Activated CD4-positive, alpha-beta T cell treated with anti-CD3 and anti-CD28 coated beads for 36 hours (primary cell): ENCODE measurements at regions of chr7 and their contacts with region 1.

Region 1: DNA sequence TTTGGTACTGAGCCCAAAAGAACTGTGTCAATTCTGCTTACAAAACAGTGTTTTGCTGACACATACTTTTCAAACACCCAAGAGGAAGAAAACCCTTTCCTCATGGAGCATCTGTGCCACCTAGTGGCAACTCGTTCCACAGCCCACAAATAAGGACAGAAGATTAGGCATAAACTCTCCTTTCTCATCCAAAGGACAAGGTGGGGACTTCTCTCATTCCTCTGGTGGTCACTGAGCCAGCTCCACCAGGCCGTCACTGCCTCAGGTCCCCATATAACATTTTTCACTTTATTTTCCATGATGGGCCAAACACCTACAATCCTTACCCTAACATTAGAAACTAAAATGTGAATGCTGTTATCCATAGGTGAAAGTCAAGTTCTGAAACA is 76.9 kb downstream of the RNF216 start:
- DNase-seq: peak; percentile 86
- ATAC-seq: no peak
- H3K4me3 Mint-ChIP-seq: no peak overlapping the region
- H3K27ac Mint-ChIP-seq: no peak overlapping the region
- H3K4me1 Mint-ChIP-seq: peaks cover 80% of the 10 kb centered on the region
- H3K27me3 Mint-ChIP-seq: no peaks in the 10 kb centered on the region

Region 2: GRCh38 chr7:5494683-5495561 is 209.6 kb before region 1 on chr7:
- CTCF ChIA-PET with region 1: interaction called, 27 read pairs
- POLR2A ChIA-PET with region 1: no interaction called
- intact Hi-C with region 1: loop called (anchors 1 kb)
- DNase-seq: peak; percentile 90
- ATAC-seq: peak; percentile 91
- H3K4me3 Mint-ChIP-seq: no peak overlapping the region
- H3K27ac Mint-ChIP-seq: no peak overlapping the region
- H3K4me1 Mint-ChIP-seq: peaks cover 25% of the 10 kb centered on the region
- H3K27me3 Mint-ChIP-seq: no peaks in the 10 kb centered on the region

Region 3: DNA sequence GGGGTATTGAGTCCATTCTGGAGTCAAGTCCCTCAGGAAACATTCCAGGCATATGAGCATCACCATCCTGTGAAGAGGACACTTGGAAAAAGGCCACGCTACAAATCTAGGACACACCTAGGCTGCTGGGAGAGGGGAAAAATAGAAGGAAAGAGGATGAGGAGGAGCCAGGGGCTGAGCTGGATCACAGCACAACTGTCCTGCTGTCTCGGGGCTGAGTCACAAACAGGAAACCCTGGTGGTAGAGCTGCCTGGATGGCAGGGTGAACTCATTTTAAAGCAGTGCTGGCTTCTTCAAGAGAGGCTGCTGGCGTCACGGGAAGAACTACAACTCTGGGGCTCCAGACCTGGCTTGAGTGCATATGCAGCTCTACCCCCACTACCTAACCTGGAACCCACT is 74.6 kb before region 1 on chr7:
- CTCF ChIA-PET with region 1: interaction called, 6 read pairs
- POLR2A ChIA-PET with region 1: interaction called, 3 read pairs
- intact Hi-C with region 1: loop called in 1 of 2 experiments (anchors 1 kb)
- DNase-seq: peak; percentile 79
- ATAC-seq: peak; percentile 84
- H3K4me3 Mint-ChIP-seq: no peak overlapping the region
- H3K27ac Mint-ChIP-seq: peak overlapping the region; percentile 75
- H3K4me1 Mint-ChIP-seq: peaks cover 29% of the 10 kb centered on the region
- H3K27me3 Mint-ChIP-seq: no peaks in the 10 kb centered on the region

Region 4: DNA sequence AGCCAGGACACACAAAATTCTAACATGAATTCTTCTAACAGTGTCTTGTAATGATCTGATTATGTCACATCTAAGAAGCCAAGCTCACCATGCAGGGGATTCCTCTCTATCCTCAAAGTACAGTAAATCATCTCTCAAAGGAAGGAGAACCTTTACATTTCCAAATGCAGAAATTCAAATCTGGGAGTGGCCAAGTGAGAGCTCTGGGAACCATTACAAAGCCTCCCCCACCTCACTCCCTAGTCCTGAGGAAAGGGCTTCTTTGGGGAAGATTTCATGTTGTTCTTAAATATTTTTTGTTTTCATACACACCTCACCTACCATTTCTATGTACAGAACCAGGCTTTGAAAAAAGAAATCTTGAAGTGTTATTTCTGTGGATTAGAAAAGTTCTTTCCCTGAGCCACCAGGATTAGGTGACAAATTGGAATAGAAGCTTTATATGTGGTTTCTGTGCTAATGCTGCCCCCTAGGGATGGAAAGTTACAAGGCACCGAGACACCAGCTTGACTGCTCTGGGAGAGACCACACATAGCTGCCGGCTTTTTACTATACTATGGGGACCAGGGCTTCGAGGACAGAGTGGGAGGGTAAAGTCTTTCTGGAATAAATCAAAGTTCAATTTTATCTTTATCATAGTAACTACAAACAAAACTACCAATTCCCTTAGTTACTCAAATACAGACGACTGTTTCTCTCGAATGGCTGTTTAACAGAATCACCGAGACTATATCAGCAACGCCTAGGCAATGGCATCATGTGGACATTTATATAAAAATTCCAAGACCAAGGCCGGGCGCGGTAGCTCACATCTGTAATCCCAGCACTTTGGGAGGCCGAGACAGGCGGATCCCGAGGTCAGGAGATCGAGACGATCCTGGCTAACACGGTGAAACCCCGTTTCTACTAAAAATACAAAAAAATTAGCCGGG is 39.2 kb before region 1 on chr7:
- CTCF ChIA-PET with region 1: interaction called, 75 read pairs
- POLR2A ChIA-PET with region 1: interaction called, 3 read pairs
- intact Hi-C with region 1: loop called (anchors 1 kb)
- DNase-seq: peak; percentile 74
- ATAC-seq: peak; percentile 82
- H3K4me3 Mint-ChIP-seq: no peak overlapping the region
- H3K27ac Mint-ChIP-seq: no peak overlapping the region
- H3K4me1 Mint-ChIP-seq: peaks cover 24% of the 10 kb centered on the region
- H3K27me3 Mint-ChIP-seq: no peaks in the 10 kb centered on the region

Region 5: GRCh38 chr7:5689118-5689517 is 15.4 kb before region 1 on chr7:
- CTCF ChIA-PET with region 1: interaction called, 127 read pairs
- POLR2A ChIA-PET with region 1: interaction called, 12 read pairs
- intact Hi-C with region 1: loop called (anchors 1 kb)
- DNase-seq: peak; percentile 83
- ATAC-seq: peak; percentile 65
- H3K4me3 Mint-ChIP-seq: peak overlapping the region; percentile 51
- H3K27ac Mint-ChIP-seq: peak overlapping the region; percentile 95
- H3K4me1 Mint-ChIP-seq: peaks cover 90% of the 10 kb centered on the region
- H3K27me3 Mint-ChIP-seq: no peaks in the 10 kb centered on the region